Right ventricle myocardium superior (tissue), 1 donor: ENCODE measurements at regions of chr17 and their contacts with region 1.

Region 1: DNA sequence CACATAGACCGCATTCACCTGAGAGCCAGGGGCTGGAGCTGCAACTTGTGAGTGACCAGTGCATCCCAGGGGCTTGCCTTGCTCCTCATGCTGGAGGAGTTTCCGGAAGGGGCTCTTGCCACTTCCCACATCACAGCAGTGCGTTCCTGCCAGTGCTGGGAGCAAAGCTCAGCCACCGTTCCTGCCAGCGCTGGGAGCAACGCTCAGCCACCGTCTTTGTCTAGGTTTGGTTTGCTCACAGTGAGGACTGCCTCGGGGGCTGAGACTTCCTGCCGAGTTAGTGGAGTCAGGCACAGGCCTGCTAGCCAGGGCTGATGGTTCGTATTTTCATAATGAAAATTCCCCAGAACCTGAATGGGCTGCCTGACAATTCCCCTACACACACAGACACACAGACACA is 5.4 kb upstream of the CHRNE start:
- DNase-seq: no peak
- ATAC-seq: peak; percentile 32

Region 2: DNA sequence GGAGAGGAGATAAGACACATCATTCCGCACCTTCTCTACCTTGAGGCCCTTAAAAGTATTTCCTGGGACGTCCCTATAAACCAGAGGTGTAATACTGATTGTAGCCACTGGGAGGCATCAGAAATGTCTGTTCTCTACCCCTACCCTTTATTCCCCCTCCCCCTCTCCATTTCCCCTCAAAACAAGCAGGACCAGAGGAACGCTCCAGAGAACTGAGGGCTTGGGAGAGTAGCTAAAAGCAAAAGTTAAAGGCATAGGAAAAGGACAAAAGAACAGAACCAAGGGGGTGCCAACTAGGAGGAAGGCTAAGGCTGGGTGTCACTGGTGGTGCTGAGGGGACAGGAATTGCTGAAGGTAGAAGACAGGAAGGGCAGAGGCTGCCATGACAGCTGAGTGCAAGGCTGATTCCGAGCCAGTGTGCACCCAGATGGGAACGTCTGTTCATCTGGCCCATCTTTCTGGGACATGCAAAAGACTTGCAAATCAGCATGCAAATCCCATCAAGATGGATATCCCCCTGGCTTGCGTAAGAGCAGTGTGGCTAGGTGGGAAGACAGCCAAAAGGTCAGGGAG is 72.4 kb after region 1 on chr17:
- intact Hi-C with region 1: loop called (anchors 5 kb)
- DNase-seq: no peak
- ATAC-seq: peak; percentile 53

Region 3: GRCh38 chr17:5019475-5019956 is 111.2 kb after region 1 on chr17:
- intact Hi-C with region 1: no loop called
- DNase-seq: no peak
- ATAC-seq: no peak

Region 4: DNA sequence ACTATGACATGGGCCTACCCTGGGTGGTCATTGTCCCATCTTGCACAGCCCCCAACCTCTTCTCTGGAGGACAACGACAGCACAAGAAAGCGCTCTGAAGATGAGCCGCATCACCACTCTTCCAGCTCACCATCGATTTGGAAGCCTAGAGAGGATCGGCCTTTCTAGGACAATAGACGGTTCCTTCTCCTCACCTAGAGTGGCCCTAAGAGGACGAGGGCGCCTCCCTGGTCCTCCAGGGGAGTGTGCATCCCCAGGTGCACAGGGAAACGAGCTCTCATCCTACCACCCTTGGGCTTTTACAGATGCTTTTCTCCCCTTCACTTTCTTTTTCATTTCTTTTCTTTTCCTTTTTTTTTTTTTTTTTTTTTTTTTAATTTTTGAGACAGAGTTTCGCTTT is 147.2 kb after region 1 on chr17:
- intact Hi-C with region 1: loop called (anchors 5 kb)
- DNase-seq: no peak
- ATAC-seq: no peak